Dorsolateral prefrontal cortex (tissue), 120 donors: ENCODE measurements at regions of chr9 and their contacts with region 1.

Region 1: GRCh38 chr9:133787754-133788025 is 49.5 kb upstream of the SARDH start:
- DNase-seq: no peak
- H3K4me3 ChIP-seq: no peak overlapping the region
- H3K27ac ChIP-seq: no peak overlapping the region
- H3K27me3 ChIP-seq: no peaks in the 10 kb centered on the region
- CTCF ChIP-seq: no peak

Region 2: DNA sequence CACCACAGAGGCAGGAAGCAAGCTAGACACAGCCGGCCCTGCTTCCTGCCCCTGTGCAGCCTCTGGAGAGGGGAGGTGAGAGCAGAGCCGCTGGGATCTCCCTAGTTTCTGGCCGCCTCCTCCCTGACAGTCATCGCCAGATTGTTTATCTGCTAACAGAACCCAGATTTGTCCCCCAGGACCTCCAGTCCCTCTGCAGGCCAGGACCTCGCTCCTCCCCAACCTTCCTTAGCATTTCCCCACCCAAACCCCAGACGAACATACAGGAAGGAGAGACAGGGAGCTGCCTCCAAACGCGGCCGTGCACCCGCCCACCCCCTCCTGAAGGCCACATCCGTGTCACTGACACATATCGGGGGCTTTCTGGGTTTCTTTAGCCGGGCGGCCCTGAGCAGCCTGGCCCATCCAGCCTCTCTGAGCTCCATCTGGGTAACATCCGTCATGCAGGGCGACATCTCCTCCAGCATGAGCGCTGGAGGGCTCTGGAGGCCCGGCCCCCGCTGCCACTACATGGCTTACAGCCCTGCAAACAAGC is 104.0 kb before region 1 on chr9:
- intact Hi-C with region 1: no loop called
- DNase-seq: no peak
- H3K4me3 ChIP-seq: no peak overlapping the region
- H3K27ac ChIP-seq: peak overlapping the region in 46 of 59 donors; percentile 26 to 85 (median 65)
- H3K27me3 ChIP-seq: no peaks in the 10 kb centered on the region
- CTCF ChIP-seq: no peak

Region 3: GRCh38 chr9:133916159-133916541 is 128.5 kb after region 1 on chr9:
- intact Hi-C with region 1: loop called in 1 of 2 experiments (anchors 2 kb)
- DNase-seq: peak; percentile 23 to 85 (median 78)
- H3K4me3 ChIP-seq: peak overlapping the region in 31 of 59 donors; percentile 12 to 58 (median 35)
- H3K27ac ChIP-seq: peak overlapping the region in 56 of 59 donors; percentile 13 to 89 (median 78)
- H3K27me3 ChIP-seq: no peaks in the 10 kb centered on the region
- CTCF ChIP-seq: peak in 1 of 56 donors; percentile 24